ENCODE measurements at regions of chr13 and their contacts with region 1.

Region 1: DNA sequence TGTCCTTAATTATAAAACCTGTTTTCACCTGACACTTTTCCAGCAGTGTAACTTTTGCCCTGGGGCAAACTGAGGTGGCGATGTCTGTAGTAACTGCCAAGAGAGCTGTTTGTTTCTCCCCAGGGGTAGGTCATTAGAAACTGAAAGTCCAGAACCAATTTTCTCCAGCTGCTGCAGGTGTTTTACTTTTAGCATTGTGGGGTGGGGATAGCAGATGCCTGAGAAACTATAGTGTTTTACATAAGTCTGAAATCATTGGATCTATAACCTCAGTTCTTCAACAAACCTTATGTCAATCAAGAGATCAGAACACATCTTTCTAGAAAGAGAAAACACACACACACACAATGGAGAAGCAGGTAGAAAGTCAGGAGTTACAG is 92.7 kb downstream of the LHFPL6 start:
- DNase-seq: no peak

Region 2: GRCh38 chr13:39037880-39038568 is 472.3 kb before region 1 on chr13 and contains the starts of genes NHLRC3 and PROSER1:
- intact Hi-C with region 1: loop called (anchors 5 kb)
- DNase-seq: peak; percentile 89
- total RNA-seq, gene NHLRC3: 13.2 TPM
- total RNA-seq, gene PROSER1: 17.5 TPM

Region 3: GRCh38 chr13:40388617-40389016 is 878.3 kb after region 1 on chr13:
- intact Hi-C with region 1: no loop called
- DNase-seq: no peak